ENCODE measurements at regions of chr6 and their contacts with region 1.

Region 1: GRCh38 chr6:52419809-52420670 is at the start of gene EFHC1:
- DNase-seq: peak; percentile 100
- ATAC-seq: peak; percentile 96
- total RNA-seq, gene EFHC1: 6.2 TPM

Region 2: DNA sequence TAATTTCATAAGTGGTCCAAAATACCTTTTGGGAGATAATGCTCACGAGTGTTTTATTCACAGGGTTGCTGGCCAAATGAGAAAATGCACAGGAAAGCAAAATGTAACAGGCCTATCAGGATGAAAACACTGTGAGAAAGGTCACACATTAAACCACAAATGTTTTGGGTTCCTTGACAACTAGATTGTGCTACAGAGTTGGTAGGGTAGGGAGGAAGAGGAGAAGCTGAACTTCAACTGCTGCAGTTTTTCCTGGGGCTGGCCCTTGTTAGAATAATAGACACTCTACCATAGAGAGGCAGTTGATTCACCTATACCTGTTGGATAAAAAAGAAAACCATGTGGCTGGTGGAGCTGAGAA is 86.2 kb before region 1 on chr6:
- intact Hi-C with region 1: no loop called
- DNase-seq: no peak
- ATAC-seq: no peak

Region 3: GRCh38 chr6:52491203-52492069 is 71.4 kb after region 1 on chr6:
- intact Hi-C with region 1: loop called (anchors 5 kb)
- DNase-seq: no peak
- ATAC-seq: no peak

Region 4: DNA sequence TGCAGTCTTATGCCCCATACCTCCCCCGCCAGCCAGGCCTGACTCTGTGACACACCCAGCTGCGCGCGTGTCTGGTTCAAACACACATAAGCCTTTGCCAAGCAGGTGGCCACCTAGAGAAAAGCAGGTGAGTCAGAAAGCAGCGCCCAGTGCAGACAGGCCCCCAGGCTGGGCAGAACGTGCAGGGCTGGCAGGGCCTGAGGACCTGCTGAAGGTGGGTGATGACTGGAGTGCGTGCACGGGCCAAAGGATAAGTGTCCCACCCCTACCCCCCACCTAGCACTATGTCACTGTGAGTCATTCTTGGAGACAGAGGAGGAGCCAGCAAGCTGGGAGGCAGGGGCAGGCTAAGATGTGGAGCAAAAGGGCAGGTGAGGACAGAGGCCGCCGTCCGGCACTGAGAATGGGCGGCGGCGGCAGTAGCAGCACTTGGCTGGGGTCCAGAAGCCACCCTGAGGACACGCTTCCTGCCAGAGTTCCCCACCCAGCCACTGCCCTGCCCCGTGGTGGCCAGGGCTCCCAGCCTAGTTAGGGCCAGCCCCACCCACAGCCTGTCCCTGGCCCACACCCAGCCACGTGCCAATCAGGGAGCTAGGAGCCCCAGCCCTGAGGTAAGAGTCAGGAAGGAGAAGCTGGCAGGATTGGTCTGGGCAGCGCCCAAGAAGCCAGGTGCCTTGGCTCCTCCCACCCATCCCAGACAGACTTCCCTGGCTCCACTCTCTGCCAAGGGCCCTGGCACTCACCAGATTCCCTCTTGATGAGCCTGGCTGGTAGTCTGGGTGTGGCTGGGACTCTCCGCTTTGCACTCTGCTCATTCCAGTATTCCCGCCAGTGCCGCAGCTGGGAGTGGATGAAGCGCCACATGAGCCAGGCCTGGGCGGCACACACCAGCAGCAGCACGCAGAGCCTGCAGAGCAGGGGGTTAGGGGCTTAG is 84.1 kb after region 1 on chr6:
- intact Hi-C with region 1: loop called (anchors 5 kb)
- DNase-seq: peak; percentile 93
- ATAC-seq: peak; percentile 85

Region 5: DNA sequence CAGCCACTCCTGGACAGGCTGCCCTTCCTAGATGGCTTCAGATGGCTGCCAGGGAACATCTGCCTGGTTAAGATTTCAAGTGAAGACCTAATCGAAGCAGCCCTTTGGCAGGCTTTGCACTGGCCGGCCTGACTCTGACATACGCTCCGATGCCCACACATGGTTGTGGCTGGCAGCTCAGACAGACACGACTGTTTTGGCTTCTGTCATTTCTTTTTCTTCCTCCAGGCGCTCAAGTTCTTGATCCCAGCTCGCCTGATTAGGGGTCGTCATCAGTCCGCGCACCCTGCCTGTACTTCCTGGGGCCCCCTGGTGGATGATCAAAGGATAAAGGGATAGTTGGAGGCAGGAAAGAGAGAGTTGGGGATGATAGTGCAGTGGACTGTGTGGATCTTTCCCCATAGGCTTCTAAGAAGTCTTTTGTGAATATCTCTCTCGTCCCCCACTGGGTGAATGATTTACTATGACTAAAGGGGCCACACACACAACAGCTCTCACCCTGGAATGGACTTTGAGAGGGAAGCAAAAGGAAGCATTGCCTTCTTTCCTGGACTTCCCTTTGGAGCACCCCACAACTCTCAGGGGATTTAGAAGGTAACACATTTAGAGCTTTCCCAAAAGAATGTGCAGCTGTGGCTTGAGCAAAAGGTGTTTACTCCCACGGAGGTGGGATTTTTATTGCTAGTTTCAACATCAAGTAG is 178.2 kb after region 1 on chr6:
- intact Hi-C with region 1: loop called (anchors 5 kb)
- DNase-seq: peak; percentile 61
- ATAC-seq: peak; percentile 80

Region 6: GRCh38 chr6:52663120-52663935 is 243.3 kb after region 1 on chr6:
- intact Hi-C with region 1: loop called (anchors 2 kb)
- DNase-seq: no peak
- ATAC-seq: peak; percentile 74